HCT116 (cell line): ENCODE measurements at regions of chr12 and their contacts with region 1.

Region 1: GRCh38 chr12:117212563-117213190 is 22.4 kb upstream of the FBXO21 start:
- DNase-seq: peak; percentile 68
- ATAC-seq: peak; percentile 93
- H3K4me3 ChIP-seq: no peak overlapping the region
- H3K27ac ChIP-seq: no peak overlapping the region
- H3K4me1 ChIP-seq: no peaks in the 10 kb centered on the region
- H3K27me3 ChIP-seq: peaks cover 9% of the 10 kb centered on the region; the same call in 1 of the 2 replicates
- CTCF ChIP-seq: peak; percentile 88 to 98 (median 91)
- POLR2A ChIP-seq: no peak
- RAD21 ChIP-seq: peak; percentile 92

Region 2: DNA sequence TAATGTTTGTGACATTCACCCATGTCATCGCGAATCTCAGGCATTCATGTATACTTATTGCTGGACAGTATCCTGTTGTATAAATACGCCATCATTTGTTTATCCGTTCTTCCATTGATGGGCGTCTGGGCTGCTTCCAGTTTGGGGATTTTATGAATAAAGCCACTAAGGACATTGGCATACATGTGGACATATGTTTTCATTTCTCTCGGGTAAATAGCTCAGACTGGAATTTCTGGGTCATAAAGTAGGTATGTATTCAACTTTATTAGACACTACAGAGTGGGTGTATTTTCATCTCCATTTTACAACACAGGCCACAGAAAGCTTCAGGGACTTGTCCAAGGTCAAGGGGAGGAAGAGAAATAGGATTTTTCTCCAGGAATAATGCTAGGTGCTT is 380.3 kb before region 1 on chr12:
- CTCF ChIA-PET with region 1: no interaction called
- POLR2A ChIA-PET with region 1: no interaction called
- RAD21 ChIA-PET with region 1: no interaction called
- intact Hi-C with region 1: no loop called
- DNase-seq: no peak
- ATAC-seq: no peak
- H3K4me3 ChIP-seq: no peak overlapping the region
- H3K27ac ChIP-seq: no peak overlapping the region
- H3K4me1 ChIP-seq: no peaks in the 10 kb centered on the region
- H3K27me3 ChIP-seq: no peaks in the 10 kb centered on the region
- CTCF ChIP-seq: no peak
- POLR2A ChIP-seq: no peak
- RAD21 ChIP-seq: no peak

Region 3: GRCh38 chr12:117069926-117070900 is 142.5 kb before region 1 on chr12:
- CTCF ChIA-PET with region 1: no interaction called
- POLR2A ChIA-PET with region 1: no interaction called
- RAD21 ChIA-PET with region 1: no interaction called
- intact Hi-C with region 1: no loop called
- DNase-seq: no peak
- ATAC-seq: no peak
- H3K4me3 ChIP-seq: no peak overlapping the region
- H3K27ac ChIP-seq: no peak overlapping the region
- H3K4me1 ChIP-seq: no peaks in the 10 kb centered on the region
- H3K27me3 ChIP-seq: no peaks in the 10 kb centered on the region
- CTCF ChIP-seq: no peak
- POLR2A ChIP-seq: no peak
- RAD21 ChIP-seq: no peak

Region 4: DNA sequence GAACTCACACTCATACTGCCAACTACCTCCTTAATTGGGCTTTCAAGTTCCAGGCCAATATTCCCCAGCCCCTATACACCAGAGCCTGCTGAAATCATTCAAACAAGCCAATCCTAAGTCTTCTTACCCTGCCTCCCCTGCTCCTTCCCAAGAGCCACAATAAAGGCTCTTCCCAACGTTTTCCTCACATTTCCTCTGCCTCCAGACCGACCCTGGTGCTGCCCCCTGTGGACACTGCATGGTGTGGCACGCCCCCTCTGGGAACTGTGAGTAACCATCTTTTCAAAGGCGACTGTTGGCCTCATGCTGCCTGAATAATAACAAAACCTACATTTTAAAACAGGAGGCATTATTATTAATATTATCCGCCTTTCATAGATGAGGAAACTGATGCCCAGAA is 260.3 kb after region 1 on chr12:
- CTCF ChIA-PET with region 1: no interaction called
- POLR2A ChIA-PET with region 1: no interaction called
- RAD21 ChIA-PET with region 1: no interaction called
- intact Hi-C with region 1: loop called (anchors 10 kb)
- DNase-seq: peak; percentile 10
- ATAC-seq: peak; percentile 96
- H3K4me3 ChIP-seq: no peak overlapping the region
- H3K27ac ChIP-seq: no peak overlapping the region
- H3K4me1 ChIP-seq: no peaks in the 10 kb centered on the region
- H3K27me3 ChIP-seq: no peaks in the 10 kb centered on the region
- CTCF ChIP-seq: peak; percentile 38 to 90 (median 84); a peak in 5 of 6 replicates
- POLR2A ChIP-seq: no peak
- RAD21 ChIP-seq: peak; percentile 33; the same call in 1 of the 2 replicates

Region 5: GRCh38 chr12:117587631-117588287 is 375.1 kb after region 1 on chr12:
- CTCF ChIA-PET with region 1: interaction called, 3 read pairs
- POLR2A ChIA-PET with region 1: no interaction called
- RAD21 ChIA-PET with region 1: no interaction called
- intact Hi-C with region 1: loop called (anchors 2 kb)
- DNase-seq: peak; percentile 15
- ATAC-seq: peak; percentile 97
- H3K4me3 ChIP-seq: no peak overlapping the region
- H3K27ac ChIP-seq: no peak overlapping the region
- H3K4me1 ChIP-seq: no peaks in the 10 kb centered on the region
- H3K27me3 ChIP-seq: no peaks in the 10 kb centered on the region
- CTCF ChIP-seq: peak; percentile 76 to 91 (median 86); a peak in 5 of 6 replicates
- POLR2A ChIP-seq: no peak
- RAD21 ChIP-seq: peak; percentile 84

Region 6: GRCh38 chr12:117671734-117672133 is 459.1 kb after region 1 on chr12:
- CTCF ChIA-PET with region 1: no interaction called
- POLR2A ChIA-PET with region 1: no interaction called
- RAD21 ChIA-PET with region 1: no interaction called
- intact Hi-C with region 1: loop called (anchors 2 kb)
- DNase-seq: peak; percentile 29
- ATAC-seq: peak; percentile 90
- H3K4me3 ChIP-seq: no peak overlapping the region
- H3K27ac ChIP-seq: no peak overlapping the region
- H3K4me1 ChIP-seq: peaks cover 0 to 5% of the 10 kb centered on the region in 2 experiments; a peak in 1 of 4 replicates
- H3K27me3 ChIP-seq: 0 out of 2 replicates have a peak, but pooled peaks cover 5% of the 10 kb centered on the region
- CTCF ChIP-seq: peak; percentile 74 to 90 (median 88); a peak in 5 of 6 replicates
- POLR2A ChIP-seq: no peak
- RAD21 ChIP-seq: peak; percentile 84

Region 7: GRCh38 chr12:117850048-117850447 is 637.4 kb after region 1 on chr12:
- CTCF ChIA-PET with region 1: interaction called, 7 read pairs
- POLR2A ChIA-PET with region 1: no interaction called
- RAD21 ChIA-PET with region 1: interaction called in 1 of 2 experiments, 3 read pairs
- intact Hi-C with region 1: loop called (anchors 1 kb)
- DNase-seq: peak; percentile 44
- ATAC-seq: peak; percentile 76
- H3K4me3 ChIP-seq: no peak overlapping the region
- H3K27ac ChIP-seq: no peak overlapping the region
- H3K4me1 ChIP-seq: peaks cover 0 to 20% of the 10 kb centered on the region in 2 experiments; a peak in 3 of 4 replicates
- H3K27me3 ChIP-seq: no peaks in the 10 kb centered on the region
- CTCF ChIP-seq: peak; percentile 66 to 92 (median 85); a peak in 5 of 6 replicates
- POLR2A ChIP-seq: no peak
- RAD21 ChIP-seq: peak; percentile 65